ENCODE measurements at regions of chr19 and their contacts with region 1.

Region 1: GRCh38 chr19:1189419-1189818 is 15.4 kb upstream of the SBNO2 start:
- DNase-seq: peak in 1 of 2 experiments; percentile 71
- ATAC-seq: peak; percentile 67 to 77; a peak in 5 of 6 replicates
- H3K4me3 ChIP-seq: no peak overlapping the region
- H3K27ac ChIP-seq: peak overlapping the region; percentile 56 to 90
- H3K4me1 ChIP-seq: peaks cover 31% of the 10 kb centered on the region
- CTCF ChIP-seq: no peak
- EP300 ChIP-seq: no peak
- POLR2A ChIP-seq: no peak
- RAD21 ChIP-seq: no peak

Region 2: GRCh38 chr19:1050989-1051788 is 138.2 kb before region 1 on chr19:
- CTCF ChIA-PET with region 1: no interaction called
- POLR2A ChIA-PET with region 1: no interaction called
- DNase-seq: no peak
- ATAC-seq: no peak
- H3K4me3 ChIP-seq: no peak overlapping the region
- H3K27ac ChIP-seq: no peak overlapping the region
- H3K4me1 ChIP-seq: no peaks in the 10 kb centered on the region
- CTCF ChIP-seq: no peak
- EP300 ChIP-seq: no peak
- POLR2A ChIP-seq: no peak
- RAD21 ChIP-seq: no peak

Region 3: GRCh38 chr19:1122972-1123363 is 66.5 kb before region 1 on chr19:
- CTCF ChIA-PET with region 1: interaction called, 11 read pairs
- POLR2A ChIA-PET with region 1: no interaction called
- DNase-seq: peak in 1 of 2 experiments; percentile 84
- ATAC-seq: peak; percentile 38 to 82; a peak in 4 of 6 replicates
- H3K4me3 ChIP-seq: no peak overlapping the region
- H3K27ac ChIP-seq: no peak overlapping the region
- H3K4me1 ChIP-seq: peaks cover 9% of the 10 kb centered on the region; the same call in 2 of the 3 replicates
- CTCF ChIP-seq: no peak
- EP300 ChIP-seq: no peak
- POLR2A ChIP-seq: no peak
- RAD21 ChIP-seq: no peak

Region 4: DNA sequence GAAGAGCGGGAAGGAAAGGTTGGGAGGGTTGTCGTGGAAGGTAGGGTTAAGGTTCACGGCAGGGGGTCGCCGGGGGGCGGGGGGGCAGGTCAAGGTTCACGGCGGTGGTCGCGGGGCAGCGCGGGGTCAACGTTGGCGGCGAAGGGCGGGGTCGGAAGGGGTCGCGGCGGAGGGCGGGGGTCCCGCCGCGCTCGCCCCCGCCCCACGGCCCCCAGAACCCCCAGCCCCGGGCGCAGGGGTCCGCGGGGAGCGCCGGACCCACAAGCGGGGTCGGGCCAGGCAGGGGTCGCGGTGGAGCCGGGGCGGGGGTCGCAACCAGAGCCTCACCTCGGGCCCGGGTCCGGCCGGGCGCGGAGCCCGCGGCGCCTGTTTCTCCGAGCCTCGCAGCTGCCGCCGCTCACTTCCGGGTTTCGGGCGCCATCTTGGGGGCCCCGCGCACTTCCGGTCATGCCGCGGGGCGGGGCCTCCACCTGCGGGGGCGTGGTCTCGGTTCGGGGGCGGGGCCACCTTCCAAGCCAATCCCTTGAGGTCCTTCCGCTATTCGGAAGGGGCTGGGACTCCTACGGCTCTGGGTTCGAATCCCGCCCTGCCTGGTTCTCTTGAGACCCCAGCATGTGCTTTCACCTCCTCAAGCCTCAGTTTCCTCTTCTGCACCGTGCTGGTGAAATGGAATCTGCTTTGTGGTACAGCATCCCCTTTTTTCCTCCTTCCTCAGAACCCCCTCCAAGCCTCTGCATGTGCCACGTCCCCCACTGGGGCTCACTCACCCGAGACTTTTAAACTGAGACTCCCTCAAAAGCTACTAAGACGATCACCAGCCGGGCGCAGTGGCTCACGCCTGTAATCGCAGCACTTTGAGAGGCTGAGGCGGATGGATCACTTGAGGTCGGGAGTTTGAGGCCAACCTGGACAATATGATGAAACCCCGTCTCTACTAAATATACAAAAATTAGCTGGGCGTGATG is 15.3 kb before region 1 on chr19 and contains the start of gene SBNO2:
- CTCF ChIA-PET with region 1: interaction called, 38 read pairs
- POLR2A ChIA-PET with region 1: no interaction called
- DNase-seq: peak; percentile 64 to 89
- ATAC-seq: peak; percentile 28 to 34; a peak in 4 of 6 replicates
- H3K4me3 ChIP-seq: peak within 1 kb of the TSS; percentile 98
- H3K27ac ChIP-seq: peak within 1 kb of the TSS; percentile 100
- H3K4me1 ChIP-seq: peaks cover 72% of the 10 kb centered on the region
- CTCF ChIP-seq: no peak
- EP300 ChIP-seq: no peak
- POLR2A ChIP-seq: peak; percentile 59
- RAD21 ChIP-seq: no peak
- polyA plus RNA-seq, gene SBNO2: 6.8 and 8.4 TPM in 2 replicates

Region 5: GRCh38 chr19:1205114-1206062 is 16.0 kb after region 1 on chr19 and contains the start of gene STK11:
- CTCF ChIA-PET with region 1: interaction called, 13 read pairs
- POLR2A ChIA-PET with region 1: no interaction called
- DNase-seq: peak; percentile 94 to 95
- ATAC-seq: peak; percentile 97
- H3K4me3 ChIP-seq: peak within 1 kb of the TSS; percentile 97
- H3K27ac ChIP-seq: peak within 1 kb of the TSS; percentile 95 to 100
- H3K4me1 ChIP-seq: peaks cover 24% of the 10 kb centered on the region
- CTCF ChIP-seq: no peak
- EP300 ChIP-seq: no peak
- POLR2A ChIP-seq: peak; percentile 20
- RAD21 ChIP-seq: no peak
- polyA plus RNA-seq, gene STK11: 12.2 and 16.2 TPM in 2 replicates

Region 6: DNA sequence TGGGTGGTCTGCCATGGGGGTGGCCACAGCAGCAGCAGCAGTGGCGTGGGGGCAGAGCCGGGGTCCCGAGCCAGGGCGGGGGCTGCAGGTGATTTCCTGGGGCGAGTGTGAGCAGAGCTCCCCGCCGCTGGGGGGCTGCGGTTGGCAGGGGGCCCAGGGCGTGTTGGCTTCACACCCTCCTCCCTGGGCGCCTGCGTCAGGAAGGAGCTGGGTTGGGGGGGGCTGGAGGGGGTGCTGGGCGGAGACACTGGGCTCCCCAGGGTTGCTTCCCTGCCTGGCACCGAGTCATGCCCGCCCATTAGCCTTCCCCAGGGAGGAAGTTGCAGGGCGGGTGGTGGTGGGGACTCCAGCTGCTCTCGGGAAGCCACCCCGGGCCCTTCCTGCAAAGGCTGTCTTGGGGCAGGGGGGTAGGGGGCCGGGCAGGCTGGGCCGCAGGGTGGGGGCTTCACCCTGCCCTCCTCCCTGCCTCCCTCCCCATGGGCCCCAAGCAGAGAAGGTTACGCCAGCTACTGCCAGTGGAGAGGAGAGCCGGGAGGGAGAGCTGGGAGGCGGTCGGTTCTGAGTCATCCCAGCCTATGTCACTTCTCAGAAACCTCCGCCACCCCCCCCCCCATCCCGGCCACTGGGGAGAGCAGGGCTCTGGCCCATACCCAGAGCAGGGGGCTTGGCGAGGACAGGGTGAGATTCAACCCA is 63.5 kb after region 1 on chr19:
- CTCF ChIA-PET with region 1: no interaction called
- POLR2A ChIA-PET with region 1: no interaction called
- DNase-seq: peak in 1 of 2 experiments; percentile 91
- ATAC-seq: peak; percentile 36 to 61
- H3K4me3 ChIP-seq: peak overlapping the region; percentile 97
- H3K27ac ChIP-seq: peak overlapping the region; percentile 100
- H3K4me1 ChIP-seq: peaks cover 45% of the 10 kb centered on the region
- CTCF ChIP-seq: no peak
- EP300 ChIP-seq: peak; percentile 35 to 39; a peak in 2 of 5 replicates
- POLR2A ChIP-seq: no peak
- RAD21 ChIP-seq: no peak; a peak in 1 of 5 replicates